ENCODE measurements at regions of chr4 and their contacts with region 1.

Region 1: GRCh38 chr4:107183155-107183774 is 147.2 kb upstream of the DKK2 start:
- DNase-seq: peak; percentile 45
- H3K27ac ChIP-seq: no peak overlapping the region
- CTCF ChIP-seq: peak; percentile 82

Region 2: DNA sequence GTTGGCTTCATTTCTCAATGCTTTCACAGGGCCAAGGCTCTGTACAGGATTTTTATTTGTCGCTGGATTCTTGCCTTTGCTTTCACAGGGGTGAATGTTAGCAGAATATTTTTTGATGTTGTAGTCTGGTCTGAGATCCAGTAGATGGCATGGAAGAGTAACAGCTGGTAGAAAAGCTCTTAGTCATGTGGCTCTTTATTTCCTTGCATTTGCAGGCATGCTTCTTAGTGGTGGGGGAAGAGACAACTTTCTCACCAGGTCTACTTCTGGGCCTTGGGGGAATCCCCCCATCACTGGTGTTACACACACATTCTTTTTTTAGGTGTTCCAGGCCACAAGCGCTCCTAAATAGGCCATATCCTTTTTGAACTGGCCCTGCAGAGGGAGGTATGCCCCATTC is 88.9 kb before region 1 on chr4:
- CTCF ChIA-PET with region 1: interaction called, 10 read pairs
- POLR2A ChIA-PET with region 1: no interaction called
- DNase-seq: peak; percentile 16
- H3K27ac ChIP-seq: no peak overlapping the region
- CTCF ChIP-seq: no peak